ENCODE measurements at regions of chr15 and their contacts with region 1.

Region 1: DNA sequence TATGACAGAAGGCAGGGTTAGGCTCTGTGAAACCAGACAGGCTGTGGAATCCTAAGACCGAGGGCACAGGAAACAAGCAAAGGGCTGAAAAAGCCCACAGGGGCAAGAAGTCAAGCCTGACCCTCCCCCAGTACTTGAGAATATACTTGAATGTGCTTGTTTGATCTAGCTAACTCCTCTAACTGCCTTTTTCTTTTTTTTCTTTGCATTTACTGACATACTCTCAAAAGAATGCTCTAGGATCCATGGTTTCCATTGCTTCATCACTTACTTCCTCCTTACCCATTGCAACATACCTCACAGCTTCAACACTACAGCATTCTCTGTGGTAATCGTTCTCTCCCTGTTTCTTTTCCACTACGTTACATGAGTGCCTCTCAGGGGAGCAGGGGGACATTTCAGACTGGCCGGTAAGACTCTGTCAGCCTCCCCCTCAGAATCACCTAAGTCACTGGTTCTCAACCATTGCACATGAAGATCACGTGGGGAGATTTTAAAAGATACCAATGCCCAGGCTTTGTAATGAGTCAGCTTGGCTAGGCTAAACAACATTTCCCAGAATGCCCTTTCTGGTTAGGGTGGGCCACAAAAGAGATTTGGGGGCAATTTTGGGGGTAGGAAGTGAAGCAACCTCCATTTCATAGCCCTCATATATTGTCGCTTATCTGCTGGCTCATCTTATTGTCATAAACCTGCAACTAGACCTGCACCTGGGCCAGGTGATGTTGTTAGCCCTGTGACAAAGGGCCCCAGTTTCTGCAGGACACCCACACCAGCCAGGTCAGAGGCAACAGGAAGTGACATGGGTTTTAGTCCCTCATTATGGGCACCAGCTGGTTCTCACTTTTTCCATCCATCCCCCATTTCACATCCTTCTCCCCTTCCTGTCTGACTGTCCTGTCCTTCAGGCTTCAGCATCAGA is 24.6 kb upstream of the RSL24D1 start:
- DNase-seq: no peak
- H3K4me3 Mint-ChIP-seq: peak overlapping the region; percentile 23
- H3K27ac Mint-ChIP-seq: peak overlapping the region; percentile 89
- H3K4me1 Mint-ChIP-seq: peaks cover 61% of the 10 kb centered on the region
- H3K27me3 Mint-ChIP-seq: no peaks in the 10 kb centered on the region

Region 2: GRCh38 chr15:55074431-55074830 is 146.9 kb before region 1 on chr15:
- intact Hi-C with region 1: no loop called
- DNase-seq: no peak
- H3K4me3 Mint-ChIP-seq: no peak overlapping the region
- H3K27ac Mint-ChIP-seq: no peak overlapping the region
- H3K4me1 Mint-ChIP-seq: peaks cover 10% of the 10 kb centered on the region
- H3K27me3 Mint-ChIP-seq: no peaks in the 10 kb centered on the region

Region 3: GRCh38 chr15:55196458-55197361 is 24.6 kb before region 1 on chr15 and contains the start of gene RSL24D1:
- intact Hi-C with region 1: loop called (anchors 2 kb)
- DNase-seq: peak; percentile 95
- H3K4me3 Mint-ChIP-seq: no peak within 1 kb of the TSS
- H3K27ac Mint-ChIP-seq: no peak within 1 kb of the TSS
- H3K4me1 Mint-ChIP-seq: peaks cover 20% of the 10 kb centered on the region
- H3K27me3 Mint-ChIP-seq: no peaks in the 10 kb centered on the region
- total RNA-seq, gene RSL24D1: 94.0 and 97.0 TPM in 2 replicates

Region 4: GRCh38 chr15:55237219-55238130 is 16.1 kb after region 1 on chr15:
- intact Hi-C with region 1: loop called (anchors 1 kb)
- DNase-seq: no peak
- H3K4me3 Mint-ChIP-seq: peak overlapping the region; percentile 22
- H3K27ac Mint-ChIP-seq: peak overlapping the region; percentile 84
- H3K4me1 Mint-ChIP-seq: peaks cover 56% of the 10 kb centered on the region
- H3K27me3 Mint-ChIP-seq: no peaks in the 10 kb centered on the region

Region 5: DNA sequence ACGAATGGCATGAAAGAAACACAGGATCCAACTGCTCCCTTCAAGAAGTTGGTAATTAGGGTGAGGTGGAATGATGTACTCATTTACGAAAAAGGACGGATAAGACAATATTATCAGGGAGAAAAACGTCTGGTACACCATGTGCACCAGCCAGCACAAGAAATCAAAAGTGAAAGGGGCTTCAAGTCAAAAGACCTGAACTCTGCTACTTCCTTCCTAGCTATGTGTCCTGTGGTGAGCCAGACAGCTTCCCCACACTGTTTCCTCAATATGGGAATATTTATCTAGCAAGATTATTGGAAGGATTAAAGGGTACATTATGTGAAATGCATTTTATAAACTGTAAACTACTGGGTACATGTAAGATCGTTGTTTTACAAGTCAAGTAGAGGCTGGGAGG is 34.4 kb after region 1 on chr15:
- intact Hi-C with region 1: loop called (anchors 5 kb)
- DNase-seq: no peak
- H3K4me3 Mint-ChIP-seq: peak overlapping the region; percentile 72
- H3K27ac Mint-ChIP-seq: peak overlapping the region; percentile 82
- H3K4me1 Mint-ChIP-seq: peaks cover 66% of the 10 kb centered on the region
- H3K27me3 Mint-ChIP-seq: no peaks in the 10 kb centered on the region

Region 6: GRCh38 chr15:55290528-55291057 is 69.2 kb after region 1 on chr15:
- intact Hi-C with region 1: loop called (anchors 1 kb)
- DNase-seq: peak; percentile 77
- H3K4me3 Mint-ChIP-seq: peak overlapping the region; percentile 78
- H3K27ac Mint-ChIP-seq: peak overlapping the region; percentile 83
- H3K4me1 Mint-ChIP-seq: peaks cover 31% of the 10 kb centered on the region
- H3K27me3 Mint-ChIP-seq: no peaks in the 10 kb centered on the region

Region 7: DNA sequence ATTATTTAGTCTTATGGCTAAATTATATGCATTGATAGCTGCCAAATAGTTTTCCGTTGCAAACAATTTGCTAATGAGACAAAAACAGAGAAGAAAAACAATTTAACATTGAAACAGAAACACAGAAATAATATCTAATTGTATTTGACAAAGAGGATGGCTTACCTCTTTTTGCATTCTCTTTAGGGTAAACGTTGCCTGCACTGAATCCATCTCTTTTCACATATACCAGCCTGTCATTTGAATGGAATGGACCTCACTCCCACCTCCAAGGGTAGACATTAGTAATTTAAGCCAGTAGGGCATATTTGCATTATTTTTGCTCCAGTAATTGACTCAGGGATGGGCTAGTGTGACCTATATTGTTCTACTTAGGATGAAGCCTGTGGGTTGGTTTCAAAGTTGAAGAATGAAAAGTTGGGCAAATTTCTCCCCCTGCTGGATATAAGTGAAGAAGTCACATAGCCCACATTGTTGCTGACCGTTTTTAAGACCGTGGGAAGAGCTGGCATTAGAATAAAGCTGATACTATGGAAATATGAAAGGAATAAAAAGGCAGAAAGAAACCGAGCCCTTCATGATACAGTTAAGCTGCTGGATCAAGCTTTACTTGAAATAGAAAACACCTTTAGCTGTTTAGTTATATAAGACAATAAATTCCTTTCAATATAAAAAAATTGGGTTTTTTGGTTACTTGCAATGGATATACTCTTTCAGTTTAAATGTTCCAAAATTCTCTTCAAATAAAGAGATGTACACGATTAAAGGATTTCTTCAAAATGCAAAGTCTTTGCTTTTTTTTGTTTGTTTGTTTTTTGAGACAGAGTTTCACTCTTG is 213.9 kb after region 1 on chr15:
- intact Hi-C with region 1: loop called (anchors 5 kb)
- DNase-seq: no peak
- H3K4me3 Mint-ChIP-seq: no peak overlapping the region
- H3K27ac Mint-ChIP-seq: no peak overlapping the region
- H3K4me1 Mint-ChIP-seq: peaks cover 5% of the 10 kb centered on the region
- H3K27me3 Mint-ChIP-seq: no peaks in the 10 kb centered on the region

Region 8: GRCh38 chr15:56176996-56177395 is 955.6 kb after region 1 on chr15:
- intact Hi-C with region 1: no loop called
- DNase-seq: no peak
- H3K4me3 Mint-ChIP-seq: no peak overlapping the region
- H3K27ac Mint-ChIP-seq: no peak overlapping the region
- H3K4me1 Mint-ChIP-seq: peaks cover 25% of the 10 kb centered on the region
- H3K27me3 Mint-ChIP-seq: no peaks in the 10 kb centered on the region